ENCODE measurements at regions of chr1 and their contacts with region 1.

Region 1: DNA sequence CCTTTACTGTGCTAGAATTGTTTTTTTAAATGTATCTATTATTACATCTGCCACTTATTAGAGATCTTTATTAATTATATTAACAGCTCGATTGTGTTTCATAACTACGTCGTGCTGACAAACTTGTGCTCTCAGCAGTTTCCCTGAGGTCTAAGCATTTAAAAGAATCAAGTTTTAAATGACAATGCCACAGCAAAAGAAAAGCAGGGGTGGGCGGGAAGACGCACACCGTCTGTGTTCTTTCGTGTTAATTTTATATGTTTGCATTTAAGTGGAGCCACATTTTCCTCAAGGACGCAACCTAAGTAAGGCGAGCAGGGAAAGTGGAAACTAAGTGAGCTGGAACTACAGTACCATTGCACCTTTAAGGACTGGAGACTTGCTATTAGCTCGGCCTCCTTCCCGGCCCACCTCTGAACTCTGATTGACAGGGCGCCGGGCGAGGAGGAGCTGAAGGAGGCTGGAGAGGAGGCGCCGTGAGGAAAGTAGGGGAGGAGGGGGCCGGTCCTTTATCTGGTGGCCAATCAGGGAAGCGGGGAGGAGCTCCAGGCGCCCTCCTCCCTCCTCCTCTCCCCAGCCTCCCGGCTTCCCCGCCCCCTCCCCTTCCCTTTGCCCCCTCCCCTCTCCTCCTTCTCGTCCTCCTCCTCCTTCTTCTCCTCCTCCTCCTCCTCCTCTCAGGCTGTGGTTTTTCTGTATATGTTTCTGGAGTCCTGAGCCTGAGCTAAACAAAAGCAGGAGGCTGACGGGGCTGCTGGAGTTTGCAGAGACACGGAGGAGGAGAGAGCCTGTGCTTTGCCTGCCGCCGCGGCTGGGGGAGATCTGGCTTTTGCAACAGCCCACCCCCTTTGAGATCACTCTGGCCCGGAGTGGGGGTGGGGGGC is at the start of gene PBX1:
- DNase-seq: peak; percentile 99
- ATAC-seq: peak; percentile 93 to 96
- H3K4me3 ChIP-seq: peak within 1 kb of the TSS; percentile 72 to 94 (median 82)
- H3K27ac ChIP-seq: peak within 1 kb of the TSS; percentile 89 to 92 (median 90)
- H3K4me1 ChIP-seq: peaks cover 16 to 18% of the 10 kb centered on the region in 2 donors
- H3K27me3 ChIP-seq: no peaks in the 10 kb centered on the region
- CTCF ChIP-seq: peak in 1 of 5 experiments; percentile 2
- POLR2A ChIP-seq: peak; percentile 66 to 92
- total RNA-seq, gene PBX1: 21.7 to 36.5 (median 29.0) TPM

Region 2: GRCh38 chr1:164518692-164519332 is 39.9 kb before region 1 on chr1:
- in situ Hi-C with region 1: no loop called
- intact Hi-C with region 1: loop called (anchors 2 kb)
- DNase-seq: no peak
- ATAC-seq: no peak
- H3K4me3 ChIP-seq: no peak overlapping the region
- H3K27ac ChIP-seq: no peak overlapping the region
- H3K4me1 ChIP-seq: peaks cover 14 to 16% of the 10 kb centered on the region in 2 donors
- H3K27me3 ChIP-seq: no peaks in the 10 kb centered on the region
- CTCF ChIP-seq: no peak
- POLR2A ChIP-seq: no peak

Region 3: GRCh38 chr1:164611754-164612642 is 53.3 kb after region 1 on chr1:
- in situ Hi-C with region 1: no loop called
- intact Hi-C with region 1: loop called (anchors 5 kb)
- DNase-seq: peak; percentile 35 to 66
- ATAC-seq: peak; percentile 77 to 84
- H3K4me3 ChIP-seq: peak overlapping the region; percentile 34 to 43 (median 36)
- H3K27ac ChIP-seq: peak overlapping the region; percentile 78 to 85 (median 82)
- H3K4me1 ChIP-seq: peaks cover 65 to 76% of the 10 kb centered on the region in 2 donors
- H3K27me3 ChIP-seq: no peaks in the 10 kb centered on the region
- CTCF ChIP-seq: no peak
- POLR2A ChIP-seq: no peak

Region 4: GRCh38 chr1:164707868-164708331 is 149.2 kb after region 1 on chr1:
- in situ Hi-C with region 1: no loop called
- intact Hi-C with region 1: loop called (anchors 10 kb)
- DNase-seq: peak; percentile 66 to 87
- ATAC-seq: peak; percentile 79
- H3K4me3 ChIP-seq: no peak overlapping the region
- H3K27ac ChIP-seq: peak overlapping the region; percentile 75 to 88 (median 84)
- H3K4me1 ChIP-seq: peaks cover 71 to 85% of the 10 kb centered on the region in 2 donors
- H3K27me3 ChIP-seq: no peaks in the 10 kb centered on the region
- CTCF ChIP-seq: no peak
- POLR2A ChIP-seq: peak in 1 of 2 donors; percentile 31

Region 5: GRCh38 chr1:164794310-164794709 is 235.6 kb after region 1 on chr1:
- in situ Hi-C with region 1: loop called in 1 of 4 experiments (anchors 5 kb)
- intact Hi-C with region 1: no loop called
- DNase-seq: peak; percentile 70 to 84
- ATAC-seq: peak; percentile 99
- H3K4me3 ChIP-seq: no peak overlapping the region
- H3K27ac ChIP-seq: peak overlapping the region; percentile 84 to 88 (median 86)
- H3K4me1 ChIP-seq: peaks cover 23 to 54% of the 10 kb centered on the region in 2 donors
- H3K27me3 ChIP-seq: no peaks in the 10 kb centered on the region
- CTCF ChIP-seq: no peak
- POLR2A ChIP-seq: no peak